ENCODE measurements at regions of chr18 and their contacts with region 1.

Region 1: DNA sequence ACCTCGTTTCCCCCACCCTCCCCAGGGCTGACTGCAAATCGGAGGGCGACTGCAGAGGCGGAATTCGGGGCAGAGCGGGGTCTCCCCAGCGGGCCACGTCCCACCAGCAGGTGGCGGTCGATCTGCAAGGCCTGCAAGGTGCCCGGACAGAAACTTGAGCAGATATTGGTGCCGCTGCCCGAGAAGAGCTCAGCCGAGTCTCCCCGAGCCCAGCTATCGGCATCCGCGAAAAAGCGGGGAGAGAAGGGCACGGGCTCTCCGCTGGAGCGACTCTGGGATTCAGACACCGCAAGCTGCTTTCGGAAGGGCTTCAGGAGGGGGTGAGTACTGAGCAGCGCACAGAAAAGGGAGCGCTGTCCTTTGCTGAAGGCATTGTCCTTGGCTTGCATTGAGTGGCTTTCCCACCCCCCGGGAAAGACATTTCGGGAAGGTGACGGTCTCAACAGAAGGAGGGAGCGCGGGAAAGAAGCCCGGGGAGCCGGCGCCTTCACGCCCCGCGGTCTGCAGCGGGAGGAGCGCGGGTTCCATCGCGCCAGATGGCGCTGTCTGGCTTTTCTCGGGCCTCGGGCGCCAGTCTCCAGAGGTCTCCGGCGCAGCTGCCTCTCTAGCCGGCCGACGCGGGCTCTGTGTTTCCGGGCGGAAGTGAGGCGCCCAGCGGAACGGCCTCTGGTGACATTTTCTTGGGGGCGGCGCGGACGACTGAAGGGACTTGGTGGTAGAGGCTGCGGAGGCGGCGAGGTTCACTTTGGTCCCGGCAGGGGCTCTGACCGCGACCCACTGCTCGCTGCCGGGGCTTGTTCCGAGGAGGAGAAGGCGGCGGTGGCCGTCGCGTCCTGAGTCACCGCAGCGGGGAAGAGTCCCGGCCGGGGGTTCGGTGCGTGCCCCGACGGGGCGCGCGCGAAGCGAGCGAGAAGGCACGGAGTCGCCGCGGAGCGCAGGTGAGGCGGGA is 69.5 kb downstream of the HAUS1 start:
- DNase-seq: peak; percentile 96
- ATAC-seq: peak; percentile 99

Region 2: DNA sequence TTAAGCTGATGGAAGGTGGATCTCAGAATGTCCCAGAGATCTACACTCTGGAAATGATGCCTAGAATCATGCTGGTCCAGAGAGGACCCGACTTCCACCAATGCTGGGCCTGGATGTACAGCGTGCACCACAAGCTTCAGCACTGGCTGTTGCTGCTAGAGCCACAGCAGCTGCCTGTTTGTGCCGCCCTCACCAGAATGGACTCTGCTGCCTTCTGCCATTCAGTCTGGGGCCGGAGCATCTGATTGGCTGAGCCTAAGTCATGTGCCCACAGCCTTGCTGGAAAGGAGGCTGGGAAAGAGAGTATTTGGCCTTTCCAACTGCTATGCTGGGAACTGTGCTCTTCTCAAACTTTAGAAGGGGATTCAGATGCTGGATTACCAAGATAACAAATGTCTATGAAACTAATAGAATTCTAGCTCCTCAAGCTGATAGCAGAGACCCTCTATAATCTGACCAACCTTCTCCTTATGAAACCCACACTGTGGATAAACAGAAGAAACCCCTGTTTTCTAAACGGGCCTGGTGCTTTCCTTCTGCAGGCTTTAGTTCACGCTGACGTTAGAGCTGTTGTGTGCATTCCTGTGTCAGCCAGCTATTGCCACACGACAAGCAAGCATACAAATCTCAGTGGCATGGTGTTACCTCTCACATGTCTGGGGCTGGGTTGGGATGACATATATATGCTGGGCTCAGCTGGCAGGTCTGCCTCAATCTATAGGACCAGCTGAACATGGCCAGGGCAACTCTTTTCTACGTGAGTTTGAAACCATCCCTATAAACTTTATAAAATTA is 487.5 kb after region 1 on chr18:
- intact Hi-C with region 1: loop called (anchors 10 kb)
- DNase-seq: no peak
- ATAC-seq: no peak

Measured in sciatic nerve (tissue), 2 donors.